Left ventricle myocardium inferior (tissue), 1 donor: ENCODE measurements at regions of chr5 and their contacts with region 1.

Region 1: GRCh38 chr5:103139264-103139865 is 19.3 kb downstream of the PPIP5K2 start:
- DNase-seq: peak; percentile 65
- H3K4me3 ChIP-seq: no peak overlapping the region
- H3K27ac ChIP-seq: no peak overlapping the region
- H3K4me1 ChIP-seq: no peaks in the 10 kb centered on the region
- H3K27me3 ChIP-seq: no peaks in the 10 kb centered on the region
- CTCF ChIP-seq: peak; percentile 93

Region 2: DNA sequence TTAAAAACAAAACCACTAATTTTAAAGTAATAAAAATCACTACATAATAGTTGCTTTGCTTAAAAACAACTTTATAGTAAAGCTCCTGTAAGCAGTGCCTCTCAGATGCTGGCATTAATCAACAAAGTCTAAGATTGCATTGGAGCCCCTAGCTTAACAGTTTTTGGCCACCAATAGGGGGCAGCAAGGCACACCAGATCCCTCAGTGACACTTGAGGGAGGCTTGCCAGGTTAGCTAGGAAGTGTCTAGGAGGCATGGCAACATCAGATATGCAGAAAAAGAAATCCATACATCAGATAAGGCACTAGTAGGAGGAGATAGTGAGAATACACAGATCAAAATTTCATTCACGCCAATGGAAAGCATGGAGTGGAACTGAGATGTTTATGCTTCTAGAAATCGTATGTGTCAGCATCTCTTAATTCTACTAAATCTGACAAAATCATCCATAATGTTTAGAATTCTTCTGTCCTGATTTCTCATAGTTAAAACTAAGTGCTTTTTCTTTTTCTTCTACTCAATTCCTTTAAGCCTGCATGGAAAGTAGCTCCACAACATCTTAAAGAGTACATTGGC is 457.9 kb before region 1 on chr5:
- intact Hi-C with region 1: loop called (anchors 5 kb)
- DNase-seq: peak; percentile 32
- H3K4me3 ChIP-seq: no peak overlapping the region
- H3K27ac ChIP-seq: no peak overlapping the region
- H3K4me1 ChIP-seq: no peaks in the 10 kb centered on the region
- H3K27me3 ChIP-seq: no peaks in the 10 kb centered on the region
- CTCF ChIP-seq: peak; percentile 85

Region 3: DNA sequence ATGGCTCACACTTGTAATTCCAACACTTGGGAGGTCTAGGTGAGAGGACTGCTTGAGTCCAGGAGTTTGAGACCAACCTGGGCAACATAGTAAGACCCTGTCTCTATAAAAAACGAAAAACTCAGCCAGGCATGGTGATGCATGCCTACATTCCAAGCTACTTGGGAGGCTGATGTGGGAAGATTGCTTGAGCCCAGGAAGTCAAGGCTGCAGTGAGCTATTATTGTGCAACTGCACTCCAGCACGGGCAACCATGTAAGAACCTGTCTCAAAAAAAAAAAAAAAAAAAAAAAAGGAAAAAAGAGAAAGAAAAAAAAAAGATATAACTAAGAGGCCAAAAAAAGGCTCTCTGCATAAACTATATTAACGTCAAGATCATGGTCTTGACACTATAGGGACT is 46.7 kb before region 1 on chr5:
- intact Hi-C with region 1: no loop called
- DNase-seq: no peak
- H3K4me3 ChIP-seq: no peak overlapping the region
- H3K27ac ChIP-seq: peak overlapping the region; percentile 75
- H3K4me1 ChIP-seq: peaks cover 38% of the 10 kb centered on the region
- H3K27me3 ChIP-seq: no peaks in the 10 kb centered on the region
- CTCF ChIP-seq: no peak

Region 4: DNA sequence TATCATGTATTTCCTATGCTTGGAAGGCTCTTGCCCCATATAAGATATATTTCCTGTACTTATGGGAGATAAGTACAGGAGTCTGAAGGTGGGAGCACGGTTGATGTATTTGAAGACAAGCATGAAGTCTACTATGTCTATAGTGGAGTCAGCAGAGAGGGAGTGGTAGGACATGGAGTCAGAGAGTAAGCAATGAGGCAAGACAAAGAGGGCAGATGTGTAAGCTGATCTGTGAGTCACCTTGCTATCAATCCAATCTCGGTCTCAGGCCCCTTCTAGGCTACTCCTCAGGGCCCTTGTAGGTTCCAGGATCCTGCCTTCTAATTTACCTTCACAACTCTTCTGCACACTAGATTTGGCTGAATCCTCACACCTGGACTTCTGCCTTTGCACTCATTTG is 224.7 kb after region 1 on chr5:
- intact Hi-C with region 1: no loop called
- DNase-seq: no peak
- H3K4me3 ChIP-seq: no peak overlapping the region
- H3K27ac ChIP-seq: no peak overlapping the region
- H3K4me1 ChIP-seq: no peaks in the 10 kb centered on the region
- H3K27me3 ChIP-seq: no peaks in the 10 kb centered on the region
- CTCF ChIP-seq: no peak